ENCODE measurements at regions of chr13 and their contacts with region 1.

Region 1: DNA sequence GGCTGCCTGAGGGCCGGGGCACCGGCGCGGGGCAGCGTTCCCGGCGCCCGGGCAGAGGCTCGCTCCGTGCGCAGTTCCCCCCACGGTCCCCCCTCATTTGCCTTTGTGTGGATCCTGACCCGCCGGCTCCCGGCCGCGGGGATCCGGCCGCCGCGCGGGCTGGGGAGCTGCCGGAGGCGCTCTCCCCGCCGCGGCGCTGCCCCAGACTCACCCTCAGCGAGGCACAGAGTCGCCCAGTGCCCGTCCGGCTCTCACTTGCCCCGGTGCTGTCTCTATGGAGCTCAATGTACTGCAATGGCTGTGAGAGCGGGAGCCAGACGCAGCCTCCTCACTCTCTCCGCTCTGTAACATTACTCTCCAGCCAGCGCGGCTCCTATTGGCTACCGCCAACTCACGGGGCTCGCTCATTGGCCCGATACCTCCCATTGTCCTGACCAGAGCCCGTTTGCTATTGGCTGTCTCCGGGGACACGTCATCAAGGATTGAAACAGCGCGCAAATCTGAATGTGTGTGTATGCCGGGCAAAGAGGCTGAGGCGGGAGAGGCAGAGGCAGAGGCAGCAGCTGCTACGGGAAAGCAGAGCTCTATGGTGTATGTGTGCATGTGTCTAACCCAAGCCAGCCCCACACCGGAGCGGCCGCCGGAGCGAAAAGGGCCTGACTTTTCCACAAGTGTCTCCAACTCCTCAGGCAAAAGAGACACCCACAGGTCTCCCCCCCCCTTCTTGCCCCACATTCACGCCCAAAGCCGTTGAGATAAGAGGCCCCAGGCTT is at the start of gene HMGB1:
- DNase-seq: peak; percentile 93 to 99 (median 96)
- H3K4me3 ChIP-seq: peak within 1 kb of the TSS; percentile 77
- H3K4me3 Mint-ChIP-seq: peak within 1 kb of the TSS; percentile 91 to 99 (median 97)
- H3K27ac ChIP-seq: peak within 1 kb of the TSS; percentile 91
- H3K27ac Mint-ChIP-seq: peak within 1 kb of the TSS; percentile 98 to 99 (median 98)
- H3K4me1 ChIP-seq: peaks cover 27% of the 10 kb centered on the region
- H3K4me1 Mint-ChIP-seq: peaks cover 36 to 44% (median 40%) of the 10 kb centered on the region in 3 donors
- H3K27me3 ChIP-seq: no peaks in the 10 kb centered on the region
- H3K27me3 Mint-ChIP-seq: peaks cover 0 to 10% of the 10 kb centered on the region in 2 donors
- total RNA-seq, gene HMGB1: 694 to 729 TPM

Region 2: GRCh38 chr13:30617315-30618185 is 151.8 kb after region 1 on chr13 and contains the start of gene USPL1:
- CTCF ChIA-PET with region 1: interaction called, 4 read pairs
- POLR2A ChIA-PET with region 1: interaction called, 43 read pairs
- DNase-seq: peak; percentile 98 to 99 (median 99)
- H3K4me3 ChIP-seq: peak within 1 kb of the TSS; percentile 98
- H3K4me3 Mint-ChIP-seq: no peak within 1 kb of the TSS
- H3K27ac ChIP-seq: peak within 1 kb of the TSS; percentile 98
- H3K27ac Mint-ChIP-seq: no peak within 1 kb of the TSS
- H3K4me1 ChIP-seq: peaks cover 30% of the 10 kb centered on the region
- H3K4me1 Mint-ChIP-seq: peaks cover 21 to 36% (median 27%) of the 10 kb centered on the region in 3 donors
- H3K27me3 ChIP-seq: no peaks in the 10 kb centered on the region
- H3K27me3 Mint-ChIP-seq: no peaks in the 10 kb centered on the region
- total RNA-seq, gene USPL1: 15.4 to 15.6 TPM